Left cardiac atrium (tissue), 4 donors: ENCODE measurements at regions of chr17 and their contacts with region 1.

Region 1: GRCh38 chr17:48024937-48025906 is 12.4 kb downstream of the COPZ2 start:
- DNase-seq: peak; percentile 99
- ATAC-seq: peak; percentile 86 to 89

Region 2: DNA sequence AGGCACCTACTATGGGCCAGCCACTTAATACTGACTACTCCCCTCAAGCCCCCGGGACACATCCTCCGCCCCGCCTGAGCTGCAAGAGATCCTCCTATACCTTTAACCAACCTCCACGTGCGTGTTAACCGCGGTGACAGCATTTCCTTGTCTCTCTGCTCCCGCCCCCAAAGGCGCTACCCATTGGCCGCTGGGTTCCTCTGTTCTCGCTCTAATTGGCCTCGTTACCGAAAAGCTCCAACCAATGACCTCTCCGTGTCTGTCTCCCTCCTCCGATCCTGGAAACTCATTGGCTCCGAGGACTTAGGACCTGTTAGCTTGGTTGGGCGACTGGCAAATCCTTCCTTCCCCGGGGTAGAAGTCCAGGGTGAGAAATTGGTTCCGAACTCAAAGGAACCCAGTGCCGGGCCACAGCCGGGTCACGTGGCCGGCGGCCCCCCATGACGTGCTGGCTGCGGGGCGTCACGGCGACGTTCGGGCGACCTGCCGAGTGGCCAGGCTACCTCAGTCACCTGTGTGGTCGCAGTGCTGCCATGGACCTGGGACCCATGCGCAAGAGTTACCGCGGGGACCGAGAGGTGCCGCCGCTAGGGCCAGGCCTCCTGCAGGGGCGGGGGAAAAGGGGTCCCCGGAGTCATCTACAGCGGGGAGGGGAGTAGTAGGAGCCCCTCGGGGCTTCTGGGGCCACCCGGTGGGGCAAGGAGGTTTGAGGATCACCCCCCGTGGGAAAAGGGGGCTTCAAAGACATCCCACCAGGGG is 83.8 kb before region 1 on chr17 and contains the start of gene PNPO:
- intact Hi-C with region 1: no loop called
- DNase-seq: peak; percentile 96
- ATAC-seq: peak; percentile 98
- total RNA-seq, gene PNPO: 23.4 to 25.4 TPM

Region 3: GRCh38 chr17:47978324-47978723 is 46.9 kb before region 1 on chr17:
- intact Hi-C with region 1: no loop called
- DNase-seq: peak; percentile 63
- ATAC-seq: peak; percentile 67 to 81

Region 4: DNA sequence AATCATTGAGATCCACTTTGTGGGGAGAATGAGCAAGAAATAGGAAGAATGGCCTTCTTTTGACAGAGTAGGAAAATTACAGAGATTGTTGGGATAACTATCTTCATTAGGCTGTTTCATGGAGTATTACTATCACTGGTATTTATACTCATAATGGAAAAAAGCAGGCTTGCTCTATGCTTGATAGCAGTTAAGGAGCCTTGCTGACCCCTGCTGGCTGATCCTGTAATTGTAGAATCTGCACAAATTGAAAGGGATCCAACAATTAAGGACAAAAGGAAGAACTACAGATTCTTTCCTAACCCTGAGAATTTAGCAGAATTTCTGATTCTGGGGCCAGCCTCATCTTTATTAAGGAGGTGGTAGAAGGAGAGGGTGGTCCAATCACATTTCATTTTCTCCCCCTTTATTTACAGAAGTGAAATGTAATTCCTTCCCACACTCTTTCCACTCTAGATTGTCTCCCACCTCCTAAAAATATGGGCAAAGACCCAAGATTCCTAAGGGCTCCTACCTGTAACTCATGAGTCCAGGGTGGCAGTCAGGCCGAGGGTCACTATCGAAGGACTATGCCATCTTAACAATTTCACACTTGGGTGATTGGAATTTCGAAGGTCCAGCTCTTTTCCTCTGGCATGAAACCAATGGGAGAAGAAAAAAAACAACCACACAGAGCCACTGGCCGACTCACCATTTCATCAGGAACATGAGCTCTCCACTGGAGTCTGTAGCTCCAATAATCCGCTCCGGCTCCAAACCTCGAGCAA is 49.3 kb after region 1 on chr17:
- intact Hi-C with region 1: loop called (anchors 1 to 2 kb)
- DNase-seq: peak; percentile 79
- ATAC-seq: peak; percentile 85 to 90

Region 5: DNA sequence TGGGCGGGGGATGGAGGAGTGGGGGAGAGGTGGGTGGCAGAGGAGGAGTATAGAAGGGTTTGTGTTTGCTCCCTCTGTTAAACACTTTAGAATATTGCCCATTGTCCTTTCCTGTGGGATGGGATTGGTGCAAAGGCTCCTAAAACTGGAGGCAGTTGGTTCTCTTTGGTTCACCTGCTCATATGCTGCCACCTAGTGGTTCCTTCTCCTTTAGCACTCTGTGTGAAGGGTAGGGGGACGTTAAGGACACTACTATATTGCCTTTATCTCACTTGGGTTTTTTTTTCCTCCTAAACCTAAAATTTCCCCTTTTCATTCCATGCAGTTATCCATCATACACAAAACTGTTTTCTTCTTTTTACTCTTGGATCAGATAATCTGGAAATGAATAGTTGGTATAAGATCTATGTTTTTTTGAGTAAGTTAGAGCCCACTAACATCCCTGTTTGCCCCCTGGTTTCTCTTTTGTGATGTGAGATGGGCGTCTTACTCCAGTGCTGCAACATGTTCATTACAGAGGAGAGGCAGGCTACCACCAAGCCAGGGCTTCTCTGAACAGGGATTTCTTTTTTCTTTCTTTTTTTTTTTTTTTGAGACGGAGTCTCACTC is 106.1 kb after region 1 on chr17:
- intact Hi-C with region 1: loop called (anchors 1 to 5 kb)
- DNase-seq: peak; percentile 32
- ATAC-seq: peak; percentile 82 to 90

Region 6: GRCh38 chr17:48194097-48194550 is 168.9 kb after region 1 on chr17:
- intact Hi-C with region 1: no loop called
- DNase-seq: no peak
- ATAC-seq: no peak

Region 7: GRCh38 chr17:48618256-48618897 is 593.2 kb after region 1 on chr17:
- intact Hi-C with region 1: loop called (anchors 5 to 10 kb)
- DNase-seq: peak; percentile 84
- ATAC-seq: peak; percentile 91 to 93